GM10248 (cell line): ENCODE measurements at regions of chr12 and their contacts with region 1.

Region 1: DNA sequence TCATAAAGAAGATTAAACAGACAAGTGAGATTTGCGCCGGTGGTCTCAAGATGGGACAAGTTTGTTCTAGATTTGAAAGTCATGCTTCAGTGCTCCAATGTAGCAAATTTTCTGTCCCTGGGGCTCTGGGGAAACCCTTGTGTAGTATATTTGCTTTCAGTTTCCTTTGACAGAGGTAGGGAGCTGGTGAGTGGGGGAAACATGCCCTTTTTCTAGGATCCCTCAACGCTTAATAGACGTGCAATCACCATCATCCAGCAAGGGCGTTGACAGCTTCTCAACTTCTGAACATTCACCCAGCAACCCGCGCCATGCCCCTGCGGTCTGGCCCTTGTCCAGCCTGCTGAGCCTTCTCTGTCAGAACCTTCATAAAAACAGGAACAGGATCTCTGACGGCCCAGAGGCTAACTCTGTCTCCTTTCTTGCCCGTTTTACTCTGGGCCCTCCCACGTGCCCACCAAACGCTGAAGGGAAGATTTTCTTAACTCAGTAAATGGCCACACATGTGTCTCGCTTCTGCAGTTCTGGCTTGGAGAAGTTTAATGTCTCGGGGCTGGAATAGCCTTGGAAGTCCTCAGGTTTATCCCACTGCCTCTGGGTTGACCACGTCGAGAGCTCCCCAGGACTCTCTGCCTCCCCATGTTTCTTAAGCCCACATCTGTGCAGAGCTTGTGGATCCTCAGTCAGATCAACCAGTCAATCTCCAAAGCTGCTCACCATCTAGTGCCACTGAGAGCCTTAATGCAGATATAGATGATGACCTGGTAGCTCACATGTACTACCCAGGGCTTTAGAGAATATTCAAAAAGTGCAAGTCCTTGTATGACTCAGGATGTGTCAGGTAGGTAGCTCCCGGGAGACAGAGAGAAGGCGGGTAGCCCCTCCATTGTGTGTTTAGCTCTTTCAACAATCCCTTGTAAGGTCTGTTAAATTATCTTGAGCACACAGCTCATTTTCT is 58.1 kb upstream of the CCND2 start:
- DNase-seq: peak; percentile 70
- CTCF ChIP-seq: no peak

Region 2: DNA sequence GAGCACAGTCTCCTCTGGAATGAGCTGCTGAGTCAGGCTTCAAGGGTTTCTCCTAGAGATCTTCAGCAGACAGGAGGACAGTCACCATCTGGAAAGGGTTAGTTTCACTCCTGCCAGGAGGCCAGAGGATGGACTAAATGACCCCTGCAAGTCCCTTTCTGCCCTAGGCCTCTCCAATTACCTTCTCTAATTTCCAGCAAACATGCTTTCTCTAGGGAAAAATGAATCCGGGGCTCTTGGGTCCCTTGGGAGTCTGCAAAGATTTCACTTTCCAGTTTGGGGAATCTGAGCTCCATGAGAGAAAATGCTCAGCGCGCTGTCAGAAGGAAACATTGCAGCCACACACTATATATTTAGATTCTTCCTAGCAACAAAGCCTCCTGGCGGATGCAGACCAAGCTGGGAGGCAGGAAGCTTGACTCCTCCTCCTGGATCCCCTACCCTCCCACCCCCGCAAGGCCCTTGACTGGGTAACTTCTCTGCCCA is 126.3 kb before region 1 on chr12:
- CTCF ChIA-PET with region 1: no interaction called
- POLR2A ChIA-PET with region 1: no interaction called
- DNase-seq: no peak
- CTCF ChIP-seq: no peak

Region 3: GRCh38 chr12:4107436-4107878 is 108.1 kb before region 1 on chr12:
- CTCF ChIA-PET with region 1: interaction called, 11 read pairs
- POLR2A ChIA-PET with region 1: no interaction called
- DNase-seq: peak; percentile 84
- CTCF ChIP-seq: peak; percentile 67

Region 4: DNA sequence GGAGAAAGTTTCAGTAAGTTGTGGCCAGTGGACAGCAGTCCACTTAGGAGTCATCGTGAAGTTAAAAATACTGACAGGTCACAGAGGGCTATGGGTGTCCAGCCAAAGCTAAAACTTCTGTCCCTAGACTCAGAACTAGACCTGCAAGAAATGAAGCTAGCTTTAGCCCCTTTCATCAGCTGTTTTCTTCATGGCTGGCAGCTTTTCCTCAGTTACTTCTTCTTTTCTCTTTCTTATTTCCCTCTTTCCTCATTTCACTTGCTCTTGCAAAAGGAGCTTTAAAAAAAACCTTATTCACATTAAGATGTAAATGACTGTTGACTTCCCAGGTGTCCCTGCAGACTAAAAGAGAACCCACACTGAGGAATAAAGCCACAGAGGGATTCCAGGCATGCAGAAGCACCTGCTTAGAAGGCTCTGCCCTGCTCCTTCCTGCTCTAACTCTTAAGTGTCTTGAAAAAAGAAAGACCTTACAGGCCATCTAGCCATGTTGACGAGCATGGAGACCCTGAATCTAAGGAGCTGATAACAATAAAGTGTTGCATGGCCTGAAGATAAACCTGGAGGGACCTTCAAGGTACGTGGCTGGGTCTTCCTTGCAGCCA is 11.6 kb before region 1 on chr12:
- CTCF ChIA-PET with region 1: interaction called, 12 read pairs
- POLR2A ChIA-PET with region 1: no interaction called
- DNase-seq: no peak
- CTCF ChIP-seq: no peak